Activated naive CD8-positive, alpha-beta T cell treated with anti-CD3 and anti-CD28 coated beads, Interleukin-2, amount 10 ng/mL, durations not matched to agents 7 days and 5 days (primary cell): ENCODE measurements at regions of chr7 and their contacts with region 1.

Region 1: GRCh38 chr7:50359995-50360925 is 55.7 kb downstream of the IKZF1 start:
- DNase-seq: peak; percentile 76
- ATAC-seq: peak; percentile 90
- H3K4me3 Mint-ChIP-seq: peak overlapping the region; percentile 80
- H3K27ac Mint-ChIP-seq: peak overlapping the region; percentile 99
- H3K4me1 Mint-ChIP-seq: peaks cover 90% of the 10 kb centered on the region
- H3K27me3 Mint-ChIP-seq: no peaks in the 10 kb centered on the region

Region 2: GRCh38 chr7:50317221-50317678 is 43.0 kb before region 1 on chr7:
- POLR2A ChIA-PET with region 1: interaction called, 49 read pairs
- DNase-seq: no peak
- ATAC-seq: peak; percentile 76
- H3K4me3 Mint-ChIP-seq: peak overlapping the region; percentile 97
- H3K27ac Mint-ChIP-seq: peak overlapping the region; percentile 97
- H3K4me1 Mint-ChIP-seq: peaks cover 81% of the 10 kb centered on the region
- H3K27me3 Mint-ChIP-seq: no peaks in the 10 kb centered on the region

Region 3: DNA sequence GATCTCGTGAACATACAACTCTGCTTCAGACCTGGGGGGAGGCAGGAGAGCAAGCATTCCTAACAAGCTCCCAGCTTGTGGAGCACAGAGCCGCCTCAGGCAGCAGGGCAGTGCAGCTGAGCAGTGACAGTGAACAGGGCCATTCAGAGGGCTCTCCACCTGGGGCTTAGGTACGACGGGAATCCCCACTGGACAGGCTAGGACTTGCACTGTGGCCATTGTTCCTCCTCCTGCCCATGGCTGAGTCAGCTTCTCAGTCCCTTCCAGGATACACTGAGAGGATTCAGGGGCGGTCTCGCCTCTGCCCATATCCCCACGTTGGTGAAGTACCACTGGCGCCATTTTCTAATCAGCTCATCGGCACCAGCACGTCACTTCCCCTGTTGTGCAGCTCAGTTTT is 18.8 kb after region 1 on chr7:
- POLR2A ChIA-PET with region 1: no interaction called
- DNase-seq: no peak
- ATAC-seq: no peak
- H3K4me3 Mint-ChIP-seq: no peak overlapping the region
- H3K27ac Mint-ChIP-seq: peak overlapping the region; percentile 30
- H3K4me1 Mint-ChIP-seq: peaks cover 41% of the 10 kb centered on the region
- H3K27me3 Mint-ChIP-seq: no peaks in the 10 kb centered on the region